Cardiac septum (tissue), 1 donor: ENCODE measurements at regions of chr17 and their contacts with region 1.

Region 1: GRCh38 chr17:7351665-7352501 is at the start of gene KCTD11:
- DNase-seq: peak; percentile 94
- total RNA-seq, gene KCTD11: 9.6 TPM

Region 2: GRCh38 chr17:7280519-7281429 is 71.1 kb before region 1 on chr17:
- intact Hi-C with region 1: loop called (anchors 2 kb)
- DNase-seq: peak; percentile 89

Region 3: GRCh38 chr17:7329374-7329996 is 22.4 kb before region 1 on chr17:
- intact Hi-C with region 1: loop called (anchors 1 kb)
- DNase-seq: peak; percentile 98

Region 4: GRCh38 chr17:7436351-7437206 is 84.7 kb after region 1 on chr17:
- intact Hi-C with region 1: loop called (anchors 2 kb)
- DNase-seq: peak; percentile 91

Region 5: DNA sequence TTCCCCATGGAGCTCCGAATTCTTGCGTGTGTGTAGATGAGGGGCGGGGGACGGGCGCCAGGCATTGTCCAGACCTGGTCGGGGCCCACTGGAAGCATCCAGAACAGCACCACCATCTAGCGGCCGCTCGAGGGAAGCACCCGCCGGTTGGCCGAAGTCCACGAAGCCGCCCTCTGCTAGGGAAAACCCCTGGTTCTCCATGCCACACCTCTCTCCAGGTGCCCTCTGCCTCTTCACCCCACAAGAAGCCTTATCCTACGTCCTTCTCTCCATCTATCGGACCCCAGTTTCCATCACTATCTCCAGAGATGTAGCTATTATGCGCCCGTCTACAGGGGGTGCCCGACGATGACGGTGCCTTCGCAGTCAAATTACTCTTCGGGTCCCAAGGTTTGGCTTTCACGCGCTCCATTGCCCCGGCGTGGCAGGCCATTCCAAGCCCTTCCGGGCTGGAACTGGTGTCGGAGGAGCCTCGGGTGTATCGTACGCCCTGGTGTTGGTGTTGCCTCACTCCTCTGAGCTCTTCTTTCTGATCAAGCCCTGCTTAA is 209.2 kb after region 1 on chr17:
- intact Hi-C with region 1: loop called (anchors 5 kb)
- DNase-seq: peak; percentile 95